CD14-positive monocyte (primary cell): ENCODE measurements at regions of chr11 and their contacts with region 1.

Region 1: DNA sequence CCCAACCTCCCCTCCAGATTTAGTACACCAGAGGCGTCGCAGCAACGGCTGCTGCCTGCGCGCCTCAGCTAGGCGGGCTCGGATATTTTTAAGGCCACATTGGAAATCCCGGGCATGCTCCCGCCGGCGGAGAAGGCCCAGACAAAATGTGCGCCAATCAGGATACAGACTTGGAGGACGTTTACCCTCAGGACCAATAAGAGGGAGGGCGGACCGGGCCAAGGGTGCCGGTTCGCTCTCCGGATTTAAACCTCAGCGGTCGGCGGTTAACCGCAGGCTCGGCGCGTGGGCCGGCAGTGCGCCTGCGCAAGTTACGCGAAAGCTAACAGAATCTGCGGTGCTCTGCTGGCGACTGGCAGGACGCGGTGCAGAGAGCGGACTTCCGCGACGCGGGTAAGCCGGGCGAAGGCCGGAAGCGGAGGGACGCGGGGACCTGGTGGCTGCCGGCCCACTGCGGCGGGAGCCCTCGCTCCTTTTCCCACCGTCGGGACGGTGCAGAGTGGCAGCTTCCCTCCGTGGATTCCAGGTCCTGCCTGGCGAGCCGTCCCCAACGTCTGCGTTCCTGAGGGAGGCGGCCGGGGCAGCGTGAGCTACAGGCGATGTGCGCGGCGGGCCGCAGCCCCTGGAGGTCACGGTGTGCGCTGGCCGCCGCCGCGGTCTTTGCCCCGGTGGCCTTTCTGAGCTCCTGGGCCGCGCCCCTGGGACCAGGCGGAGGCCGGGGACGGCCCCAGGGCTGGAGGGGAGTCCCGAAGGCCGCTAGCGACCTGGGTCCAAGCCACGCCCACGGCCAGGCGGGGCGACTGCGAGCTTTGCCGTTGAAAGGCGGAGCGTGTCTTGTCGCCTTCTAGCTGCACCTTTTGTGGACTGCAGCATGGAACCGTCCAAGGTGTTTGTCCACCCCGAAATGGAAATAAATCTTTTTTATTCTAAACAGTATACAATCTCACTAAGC is at the start of gene HYLS1:
- DNase-seq: peak; percentile 95 to 98 (median 97)
- H3K4me3 ChIP-seq: peak within 1 kb of the TSS; percentile 58 to 93 (median 68)
- H3K4me3 Mint-ChIP-seq: peak within 1 kb of the TSS; percentile 89 to 90
- H3K27ac ChIP-seq: peak within 1 kb of the TSS; percentile 83 to 85
- H3K27ac Mint-ChIP-seq: peak within 1 kb of the TSS; percentile 78 to 93 (median 91)
- H3K4me1 ChIP-seq: peaks cover 17 to 25% of the 10 kb centered on the region in 2 donors
- H3K4me1 Mint-ChIP-seq: peaks cover 32% of the 10 kb centered on the region
- H3K27me3 ChIP-seq: no peaks in the 10 kb centered on the region
- H3K27me3 Mint-ChIP-seq: peaks cover 1 to 9% (median 5%) of the 10 kb centered on the region in 3 donors
- CTCF ChIP-seq: no peak
- polyA plus RNA-seq, gene HYLS1: 0.61 to 2.6 (median 2.0) TPM

Region 2: GRCh38 chr11:125756050-125756449 is 131.6 kb before region 1 on chr11:
- intact Hi-C with region 1: no loop called
- DNase-seq: no peak
- H3K4me3 ChIP-seq: no peak overlapping the region
- H3K4me3 Mint-ChIP-seq: no peak overlapping the region
- H3K27ac ChIP-seq: no peak overlapping the region
- H3K27ac Mint-ChIP-seq: no peak overlapping the region
- H3K4me1 ChIP-seq: no peaks in the 10 kb centered on the region
- H3K4me1 Mint-ChIP-seq: no peaks in the 10 kb centered on the region
- H3K27me3 ChIP-seq: no peaks in the 10 kb centered on the region
- H3K27me3 Mint-ChIP-seq: peaks cover 0 to 2% (median 0%) of the 10 kb centered on the region in 3 donors
- CTCF ChIP-seq: no peak

Region 3: GRCh38 chr11:125902927-125903710 is 15.5 kb after region 1 on chr11 and contains the start of gene PUS3:
- intact Hi-C with region 1: loop called in 1 of 2 experiments (anchors 1 kb)
- DNase-seq: peak; percentile 71 to 78 (median 72)
- H3K4me3 ChIP-seq: peak within 1 kb of the TSS; percentile 55 to 96 (median 86)
- H3K4me3 Mint-ChIP-seq: peak within 1 kb of the TSS; percentile 86 to 96
- H3K27ac ChIP-seq: peak within 1 kb of the TSS in 1 of 2 donors; percentile 74
- H3K27ac Mint-ChIP-seq: peak within 1 kb of the TSS; percentile 81 to 91 (median 90)
- H3K4me1 ChIP-seq: peaks cover 16 to 20% of the 10 kb centered on the region in 2 donors
- H3K4me1 Mint-ChIP-seq: peaks cover 21% of the 10 kb centered on the region
- H3K27me3 ChIP-seq: peaks cover 30 to 37% of the 10 kb centered on the region in 2 donors
- H3K27me3 Mint-ChIP-seq: peaks cover 33 to 42% (median 41%) of the 10 kb centered on the region in 3 donors
- CTCF ChIP-seq: no peak
- polyA plus RNA-seq, gene PUS3: 2.0 to 5.3 (median 3.1) TPM